Heart left ventricle (tissue), 16 donors: ENCODE measurements at regions of chr11 and their contacts with region 1.

Region 1: GRCh38 chr11:118471030-118471429 is 34.7 kb downstream of the KMT2A start:
- DNase-seq: no peak
- ATAC-seq: no peak
- H3K4me3 ChIP-seq: no peak overlapping the region
- H3K27ac ChIP-seq: no peak overlapping the region
- H3K4me1 ChIP-seq: peaks cover 0 to 9% (median 0%) of the 10 kb centered on the region in 12 donors
- H3K27me3 ChIP-seq: no peaks in the 10 kb centered on the region
- CTCF ChIP-seq: no peak
- POLR2A ChIP-seq: no peak

Region 2: DNA sequence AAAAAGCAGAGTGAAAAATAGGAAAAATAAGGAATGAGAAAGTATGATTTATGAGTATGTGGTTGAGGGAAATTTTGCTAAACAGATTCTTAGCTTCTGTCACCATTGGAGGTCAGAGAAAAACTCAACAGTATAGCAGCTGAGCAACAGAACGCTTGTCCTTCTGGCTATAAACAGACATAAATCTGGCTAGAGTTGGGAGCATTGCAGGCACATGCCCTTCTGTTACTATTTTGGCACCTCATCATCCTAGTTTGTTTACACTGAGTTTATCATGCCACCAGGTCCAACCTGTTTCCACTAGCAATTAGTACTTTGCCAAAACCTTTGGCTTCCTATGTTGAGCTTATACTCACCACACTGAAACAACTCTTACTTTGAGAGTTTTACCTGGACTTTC is 104.7 kb before region 1 on chr11:
- intact Hi-C with region 1: no loop called
- DNase-seq: peak in 1 of 5 donors; percentile 23
- ATAC-seq: peak; percentile 94 to 98 (median 96)
- H3K4me3 ChIP-seq: no peak overlapping the region
- H3K27ac ChIP-seq: peak overlapping the region; percentile 59 to 92 (median 76)
- H3K4me1 ChIP-seq: peaks cover 0 to 32% (median 4%) of the 10 kb centered on the region in 12 donors
- H3K27me3 ChIP-seq: no peaks in the 10 kb centered on the region
- CTCF ChIP-seq: no peak
- POLR2A ChIP-seq: no peak

Region 3: GRCh38 chr11:118435893-118436624 is 35.0 kb before region 1 on chr11 and contains the start of gene KMT2A:
- intact Hi-C with region 1: loop called in 2 of 10 experiments (anchors 5 kb)
- DNase-seq: peak; percentile 98 to 99 (median 99)
- ATAC-seq: peak; percentile 93 to 96 (median 94)
- H3K4me3 ChIP-seq: peak within 1 kb of the TSS; percentile 81 to 99 (median 96)
- H3K27ac ChIP-seq: peak within 1 kb of the TSS; percentile 78 to 96 (median 90)
- H3K4me1 ChIP-seq: peaks cover 0 to 57% (median 34%) of the 10 kb centered on the region in 12 donors
- H3K27me3 ChIP-seq: no peaks in the 10 kb centered on the region
- CTCF ChIP-seq: peak in 1 of 12 donors; percentile 8
- POLR2A ChIP-seq: peak in 1 of 2 donors; percentile 50
- total RNA-seq, gene KMT2A: 16.5 to 117 (median 41.5) TPM